ENCODE measurements at regions of chr3 and their contacts with region 1.

Region 1: DNA sequence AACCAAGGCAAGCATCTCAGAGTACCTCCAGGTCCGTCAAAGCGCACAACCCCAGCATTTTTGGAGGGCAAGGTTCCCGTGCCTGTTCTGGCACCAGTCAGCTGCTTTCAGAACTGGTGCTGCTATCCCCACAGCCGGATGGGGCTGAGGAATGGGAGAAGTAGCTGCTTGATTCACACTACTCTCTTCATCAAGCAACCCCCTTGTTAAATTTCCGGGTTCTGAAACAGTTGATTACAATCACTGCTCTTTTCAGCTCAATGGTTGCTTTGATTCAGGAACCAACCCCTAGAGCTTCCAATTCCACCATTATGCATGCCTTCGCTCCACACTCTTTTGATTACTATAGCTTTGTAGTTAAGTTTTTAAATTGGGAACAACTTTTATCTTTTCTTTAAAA is 12.3 kb upstream of the UBA7 start:
- DNase-seq: no peak
- H3K4me3 ChIP-seq: no peak overlapping the region
- H3K27ac ChIP-seq: no peak overlapping the region
- H3K4me1 ChIP-seq: no peaks in the 10 kb centered on the region
- H3K27me3 ChIP-seq: no peaks in the 10 kb centered on the region
- CTCF ChIP-seq: no peak

Region 2: GRCh38 chr3:49869525-49870126 is 43.6 kb after region 1 on chr3 and contains the start of gene CAMKV:
- CTCF ChIA-PET with region 1: no interaction called
- dilution Hi-C with region 1: loop called (anchors 5 kb)
- in situ Hi-C with region 1: no loop called
- intact Hi-C with region 1: no loop called
- DNase-seq: no peak
- H3K4me3 ChIP-seq: peak within 1 kb of the TSS in 1 of 3 experiments; percentile 11
- H3K27ac ChIP-seq: no peak within 1 kb of the TSS
- H3K4me1 ChIP-seq: peaks cover 4% of the 10 kb centered on the region
- H3K27me3 ChIP-seq: peaks cover 3% of the 10 kb centered on the region
- CTCF ChIP-seq: no peak
- total RNA-seq, gene CAMKV: 0.35 TPM in 1 of 2 donors, not detected in the other